Colonic mucosa (tissue), 4 donors: ENCODE measurements at regions of chr4 and their contacts with region 1.

Region 1: DNA sequence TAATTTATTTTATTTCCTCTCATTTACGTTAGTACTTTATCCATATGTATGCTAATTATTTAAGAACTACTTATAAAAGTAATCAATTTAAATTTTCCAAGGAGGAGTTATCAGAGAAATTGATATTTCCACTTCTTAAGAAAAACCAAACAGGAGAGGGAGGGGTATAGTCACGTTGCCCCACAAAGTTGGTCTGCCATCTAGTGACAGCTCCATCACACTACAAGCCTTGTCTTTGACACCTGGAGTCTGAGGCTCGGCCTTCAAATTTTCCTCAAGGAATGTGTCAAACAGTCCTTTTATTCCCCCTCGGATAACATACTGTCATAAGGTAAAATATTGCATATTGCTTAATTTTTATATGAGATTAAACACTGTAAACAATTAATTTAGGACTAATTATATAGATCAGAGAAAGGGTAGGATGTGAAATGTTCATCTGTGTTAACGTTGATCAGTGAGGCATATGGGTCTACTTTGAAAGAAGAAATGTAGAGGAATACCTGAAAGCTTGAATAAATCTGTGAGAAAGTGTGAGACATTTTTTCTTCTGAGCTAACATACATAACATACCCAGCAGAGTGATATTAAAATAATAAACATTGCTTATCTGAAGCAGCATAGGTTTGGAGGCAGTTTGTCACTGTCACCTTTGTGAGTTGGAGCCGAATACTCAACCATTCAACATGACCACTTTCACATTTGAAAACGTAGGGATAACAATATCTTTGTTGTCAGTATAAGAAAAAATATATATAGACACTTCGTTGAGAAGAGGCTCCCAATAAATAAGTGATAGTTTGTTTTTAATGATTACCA is 114.4 kb downstream of the GLRA3 start:
- DNase-seq: peak; percentile 25
- H3K4me3 ChIP-seq: no peak overlapping the region
- H3K27ac ChIP-seq: no peak overlapping the region
- H3K4me1 ChIP-seq: no peaks in the 10 kb centered on the region
- H3K27me3 ChIP-seq: no peaks in the 10 kb centered on the region
- CTCF ChIP-seq: peak; percentile 61

Region 2: GRCh38 chr4:174635732-174636131 is 78.9 kb before region 1 on chr4:
- intact Hi-C with region 1: loop called (anchors 5 kb)
- DNase-seq: no peak
- H3K4me3 ChIP-seq: no peak overlapping the region
- H3K27ac ChIP-seq: no peak overlapping the region
- H3K4me1 ChIP-seq: no peaks in the 10 kb centered on the region
- H3K27me3 ChIP-seq: no peaks in the 10 kb centered on the region
- CTCF ChIP-seq: no peak